ENCODE measurements at regions of chr12 and their contacts with region 1.

Region 1: GRCh38 chr12:124992874-124993625 is 395 bp upstream of the BRI3BP start:
- DNase-seq: peak; percentile 81
- H3K4me3 Mint-ChIP-seq: peak overlapping the region; percentile 88
- H3K27ac Mint-ChIP-seq: peak overlapping the region; percentile 83
- H3K4me1 Mint-ChIP-seq: peaks cover 33% of the 10 kb centered on the region
- H3K27me3 Mint-ChIP-seq: peaks cover 2% of the 10 kb centered on the region

Region 2: DNA sequence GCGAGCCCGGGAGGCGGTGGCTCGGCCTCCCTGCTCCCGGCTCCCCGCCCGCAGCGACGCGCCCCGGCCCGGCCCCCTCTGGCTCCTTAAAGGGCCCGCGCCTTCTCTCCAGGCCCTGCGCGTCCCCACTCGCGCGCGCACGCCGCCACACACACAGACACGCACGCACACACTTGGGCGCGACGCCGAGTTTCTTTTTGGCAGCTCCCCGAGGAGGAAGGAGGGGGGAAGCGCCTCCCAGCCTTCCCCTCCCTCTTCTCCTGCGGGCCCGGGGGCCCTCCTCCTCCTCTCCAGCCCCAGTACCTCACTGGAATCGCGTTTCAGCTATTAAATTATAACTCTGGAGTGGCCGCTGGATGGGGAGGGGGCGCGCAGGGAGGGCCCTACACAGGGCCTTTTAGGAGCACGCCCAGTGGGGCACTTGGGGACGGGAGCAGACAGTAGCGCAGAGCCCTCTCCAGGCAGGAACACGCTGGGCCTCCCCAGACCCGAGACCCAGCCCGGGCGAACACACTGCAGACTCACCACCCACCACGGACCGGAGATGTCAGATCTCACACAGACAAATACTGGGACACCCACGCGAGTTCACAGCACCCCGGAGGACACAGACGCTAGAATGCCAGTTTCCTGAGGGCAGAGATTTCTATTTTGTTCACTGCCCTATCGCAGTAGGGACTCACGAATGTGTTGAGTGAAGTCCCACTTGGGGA is 425.2 kb before region 1 on chr12:
- intact Hi-C with region 1: loop called (anchors 2 kb)
- DNase-seq: peak; percentile 82
- H3K4me3 Mint-ChIP-seq: peak overlapping the region; percentile 85
- H3K27ac Mint-ChIP-seq: peak overlapping the region; percentile 84
- H3K4me1 Mint-ChIP-seq: peaks cover 24% of the 10 kb centered on the region
- H3K27me3 Mint-ChIP-seq: peaks cover 3% of the 10 kb centered on the region

Region 3: GRCh38 chr12:124767066-124767821 is 225.8 kb before region 1 on chr12:
- intact Hi-C with region 1: no loop called
- DNase-seq: peak; percentile 76
- H3K4me3 Mint-ChIP-seq: no peak overlapping the region
- H3K27ac Mint-ChIP-seq: peak overlapping the region; percentile 29
- H3K4me1 Mint-ChIP-seq: peaks cover 27% of the 10 kb centered on the region
- H3K27me3 Mint-ChIP-seq: peaks cover 18% of the 10 kb centered on the region

Region 4: DNA sequence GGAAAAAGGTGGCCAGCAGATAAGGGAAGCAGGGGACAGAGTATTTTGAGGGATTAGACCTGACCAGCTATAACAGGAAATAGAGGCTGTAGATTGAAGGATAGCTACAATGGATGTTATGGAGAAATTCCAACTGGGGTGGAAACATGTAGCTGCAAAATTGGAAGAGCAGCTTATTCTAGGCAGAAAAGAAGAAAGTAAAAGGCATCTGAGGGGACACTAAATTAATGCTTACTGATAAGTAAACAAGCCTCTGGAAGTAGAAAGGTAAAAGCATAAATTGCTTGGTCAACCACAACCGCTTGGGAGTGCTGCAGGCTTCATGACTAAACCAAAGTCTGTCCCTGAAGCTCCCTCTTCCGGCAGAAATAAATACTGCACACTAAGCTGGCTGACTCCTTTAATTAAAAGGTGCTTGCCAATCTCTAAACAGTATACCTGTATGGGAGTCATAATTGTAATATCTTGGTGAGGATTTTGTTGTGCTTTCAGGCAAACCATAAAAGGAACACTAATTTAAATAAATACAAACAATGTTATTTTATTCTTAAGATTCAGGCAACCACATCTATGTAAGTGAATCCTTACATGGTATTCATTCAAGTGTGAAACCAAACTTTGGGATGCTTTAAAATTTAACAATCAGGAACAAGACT is 86.3 kb before region 1 on chr12:
- intact Hi-C with region 1: loop called (anchors 2 kb)
- DNase-seq: peak; percentile 86
- H3K4me3 Mint-ChIP-seq: no peak overlapping the region
- H3K27ac Mint-ChIP-seq: peak overlapping the region; percentile 1
- H3K4me1 Mint-ChIP-seq: peaks cover 36% of the 10 kb centered on the region
- H3K27me3 Mint-ChIP-seq: no peaks in the 10 kb centered on the region

Region 5: DNA sequence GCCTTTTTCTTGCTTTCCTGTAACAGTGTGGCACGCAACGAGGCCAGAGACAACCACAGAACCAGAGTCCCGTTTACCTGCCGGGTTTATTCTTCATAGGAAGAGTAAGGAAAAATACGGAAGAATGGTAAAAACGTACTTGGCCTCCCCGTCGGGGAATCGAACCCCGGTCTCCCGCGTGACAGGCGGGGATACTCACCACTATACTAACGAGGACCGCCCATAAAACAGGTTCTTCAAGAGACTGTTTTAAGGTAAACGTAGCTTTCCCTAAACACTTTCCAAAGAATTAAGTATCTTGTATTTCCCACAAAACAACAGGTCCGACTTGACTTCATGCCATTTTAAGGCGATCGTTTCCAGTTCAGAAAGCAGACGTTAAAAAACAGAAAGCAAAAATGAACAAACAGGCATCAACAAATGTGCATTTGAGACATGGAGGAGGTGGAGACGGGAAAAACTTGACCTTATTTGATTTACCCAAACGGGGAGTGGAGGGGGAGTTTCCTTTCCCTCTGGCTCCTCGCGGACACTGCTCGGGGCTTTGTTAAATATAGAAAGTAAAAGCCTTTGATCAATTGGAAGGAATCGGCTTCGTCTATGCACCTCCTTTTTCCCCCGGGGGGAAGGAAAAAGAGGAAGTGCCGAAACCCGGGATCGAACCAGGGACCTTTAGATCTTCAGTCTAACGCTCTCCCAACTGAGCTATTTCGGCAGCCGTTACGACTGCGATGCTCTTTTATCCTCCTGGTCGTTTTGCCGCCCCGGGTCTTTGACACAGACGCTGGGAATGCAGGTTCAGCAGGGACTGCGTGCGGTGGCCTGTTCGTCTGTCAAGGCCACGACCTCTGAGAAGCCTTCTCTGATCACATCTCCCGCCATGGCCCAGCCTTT is 65.6 kb before region 1 on chr12:
- intact Hi-C with region 1: loop called (anchors 1 kb)
- DNase-seq: peak; percentile 88
- H3K4me3 Mint-ChIP-seq: peak overlapping the region; percentile 88
- H3K27ac Mint-ChIP-seq: peak overlapping the region; percentile 98
- H3K4me1 Mint-ChIP-seq: peaks cover 42% of the 10 kb centered on the region
- H3K27me3 Mint-ChIP-seq: peaks cover 9% of the 10 kb centered on the region

Region 6: DNA sequence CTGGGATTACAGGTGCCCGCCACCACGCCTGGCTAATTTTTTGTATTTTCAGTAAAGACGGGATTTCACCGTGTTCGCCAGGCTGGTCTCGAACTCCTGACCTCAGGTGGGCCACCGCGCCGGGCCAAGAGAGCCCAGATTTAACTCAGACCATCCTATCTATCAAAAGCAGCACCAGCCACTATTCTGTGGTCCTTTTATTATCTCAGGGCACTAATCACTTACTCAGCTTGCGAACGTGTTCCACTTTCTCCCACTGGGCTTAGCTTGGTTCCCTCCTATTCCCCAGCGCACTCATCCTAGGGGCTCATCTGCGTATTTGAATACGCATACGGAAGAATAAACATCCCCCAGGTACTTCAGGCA is 56.0 kb after region 1 on chr12:
- intact Hi-C with region 1: loop called (anchors 1 kb)
- DNase-seq: no peak
- H3K4me3 Mint-ChIP-seq: peak overlapping the region; percentile 88
- H3K27ac Mint-ChIP-seq: peak overlapping the region; percentile 75
- H3K4me1 Mint-ChIP-seq: peaks cover 13% of the 10 kb centered on the region
- H3K27me3 Mint-ChIP-seq: no peaks in the 10 kb centered on the region

Region 7: DNA sequence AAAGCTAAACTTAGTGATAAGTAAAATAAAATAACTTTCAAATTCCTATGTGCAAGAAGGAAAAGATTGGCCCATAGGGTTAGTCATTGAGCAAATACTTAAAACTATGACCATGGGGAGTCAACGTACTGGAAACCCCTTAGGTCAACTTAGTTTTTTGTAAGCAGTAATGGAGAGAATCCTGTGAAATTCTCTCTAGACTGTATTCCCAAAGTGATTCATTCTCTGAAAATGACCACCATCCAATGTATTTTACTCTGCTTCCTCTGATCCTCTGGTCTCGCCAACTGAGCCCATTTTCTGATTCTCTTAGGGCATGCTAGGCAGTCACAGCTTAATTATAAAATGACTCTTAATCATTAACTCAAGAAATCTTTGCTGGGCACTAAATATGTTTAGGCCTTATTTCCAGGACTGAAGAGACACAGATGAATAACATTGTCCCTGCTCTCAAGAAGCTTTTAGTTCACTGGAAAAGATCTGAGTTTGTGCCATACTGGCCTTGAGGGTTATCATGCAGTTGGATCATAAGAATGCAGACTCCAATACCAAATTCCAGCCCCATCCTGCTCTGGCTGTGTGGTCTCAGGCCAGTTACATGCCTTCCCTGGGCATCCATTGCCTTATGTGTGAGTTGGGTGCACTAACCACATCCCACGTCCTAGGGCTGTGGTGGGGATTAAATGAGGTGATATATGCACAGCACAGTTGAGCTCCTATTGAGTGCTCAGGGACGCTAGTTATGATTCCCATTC is 804.5 kb after region 1 on chr12:
- intact Hi-C with region 1: no loop called
- DNase-seq: no peak
- H3K4me3 Mint-ChIP-seq: no peak overlapping the region
- H3K27ac Mint-ChIP-seq: no peak overlapping the region
- H3K4me1 Mint-ChIP-seq: no peaks in the 10 kb centered on the region
- H3K27me3 Mint-ChIP-seq: no peaks in the 10 kb centered on the region